ENCODE measurements at regions of chr1 and their contacts with region 1.

Region 1: GRCh38 chr1:35930593-35931445 is at the start of gene AGO3:
- DNase-seq: peak; percentile 94
- H3K4me3 Mint-ChIP-seq: peak within 1 kb of the TSS; percentile 94
- H3K27ac Mint-ChIP-seq: peak within 1 kb of the TSS; percentile 93
- H3K4me1 Mint-ChIP-seq: peaks cover 33% of the 10 kb centered on the region
- H3K27me3 Mint-ChIP-seq: no peaks in the 10 kb centered on the region
- total RNA-seq, gene AGO3: 23.1 to 25.3 TPM

Region 2: GRCh38 chr1:35807614-35808449 is 123.0 kb before region 1 on chr1 and contains the start of gene AGO4:
- CTCF ChIA-PET with region 1: no interaction called
- POLR2A ChIA-PET with region 1: no interaction called
- intact Hi-C with region 1: loop called (anchors 10 kb)
- DNase-seq: peak; percentile 41
- H3K4me3 Mint-ChIP-seq: peak within 1 kb of the TSS; percentile 86
- H3K27ac Mint-ChIP-seq: peak within 1 kb of the TSS; percentile 81
- H3K4me1 Mint-ChIP-seq: peaks cover 36% of the 10 kb centered on the region
- H3K27me3 Mint-ChIP-seq: no peaks in the 10 kb centered on the region
- total RNA-seq, gene AGO4: 5.1 to 6.0 TPM

Region 3: GRCh38 chr1:35882945-35883634 is 47.7 kb before region 1 on chr1 and contains the start of gene AGO1:
- CTCF ChIA-PET with region 1: interaction called, 17 read pairs
- POLR2A ChIA-PET with region 1: interaction called, 9 read pairs
- intact Hi-C with region 1: loop called (anchors 1 kb)
- DNase-seq: peak; percentile 98
- H3K4me3 Mint-ChIP-seq: peak within 1 kb of the TSS; percentile 92
- H3K27ac Mint-ChIP-seq: peak within 1 kb of the TSS; percentile 61
- H3K4me1 Mint-ChIP-seq: peaks cover 46% of the 10 kb centered on the region
- H3K27me3 Mint-ChIP-seq: no peaks in the 10 kb centered on the region
- total RNA-seq, gene AGO1: 28.8 TPM

Region 4: DNA sequence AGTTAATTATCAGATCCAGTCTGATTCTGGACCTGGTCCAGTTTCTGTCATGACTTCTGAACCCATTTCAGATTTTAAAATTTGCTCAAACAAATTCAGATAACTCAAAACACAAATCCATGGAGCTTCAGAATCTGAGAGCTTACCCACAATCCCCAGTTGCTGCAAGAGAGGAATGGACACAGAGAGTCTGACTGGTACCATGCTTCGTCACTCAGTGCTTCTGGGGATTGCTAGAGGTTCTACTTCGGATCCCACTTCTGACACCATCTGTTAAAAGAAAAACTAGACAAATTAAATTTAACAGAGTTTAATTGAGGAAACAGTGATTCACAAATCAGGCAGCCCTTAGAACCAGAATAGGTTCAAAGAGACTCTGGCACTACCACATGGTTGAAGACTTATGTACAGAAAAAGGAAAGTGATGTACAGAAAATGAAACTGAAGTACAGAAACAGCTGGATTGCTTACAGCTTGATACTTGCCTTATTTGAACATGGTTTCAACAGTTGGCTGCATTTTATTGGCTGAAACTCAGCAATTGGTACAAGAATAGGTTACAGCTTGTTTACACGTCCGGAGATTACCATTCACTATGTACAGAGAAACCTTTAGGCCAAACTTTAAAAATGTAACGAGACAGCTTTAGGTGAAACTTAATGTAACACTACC is 92.4 kb after region 1 on chr1:
- CTCF ChIA-PET with region 1: no interaction called
- POLR2A ChIA-PET with region 1: no interaction called
- intact Hi-C with region 1: loop called (anchors 10 kb)
- DNase-seq: no peak
- H3K4me3 Mint-ChIP-seq: no peak overlapping the region
- H3K27ac Mint-ChIP-seq: peak overlapping the region; percentile 34
- H3K4me1 Mint-ChIP-seq: peaks cover 7% of the 10 kb centered on the region
- H3K27me3 Mint-ChIP-seq: no peaks in the 10 kb centered on the region

Region 5: GRCh38 chr1:36342481-36343478 is 412.0 kb after region 1 on chr1:
- CTCF ChIA-PET with region 1: no interaction called
- POLR2A ChIA-PET with region 1: no interaction called
- intact Hi-C with region 1: no loop called
- DNase-seq: peak; percentile 70
- H3K4me3 Mint-ChIP-seq: no peak overlapping the region
- H3K27ac Mint-ChIP-seq: no peak overlapping the region
- H3K4me1 Mint-ChIP-seq: peaks cover 16% of the 10 kb centered on the region
- H3K27me3 Mint-ChIP-seq: no peaks in the 10 kb centered on the region